ENCODE measurements at regions of chr19 and their contacts with region 1.

Region 1: DNA sequence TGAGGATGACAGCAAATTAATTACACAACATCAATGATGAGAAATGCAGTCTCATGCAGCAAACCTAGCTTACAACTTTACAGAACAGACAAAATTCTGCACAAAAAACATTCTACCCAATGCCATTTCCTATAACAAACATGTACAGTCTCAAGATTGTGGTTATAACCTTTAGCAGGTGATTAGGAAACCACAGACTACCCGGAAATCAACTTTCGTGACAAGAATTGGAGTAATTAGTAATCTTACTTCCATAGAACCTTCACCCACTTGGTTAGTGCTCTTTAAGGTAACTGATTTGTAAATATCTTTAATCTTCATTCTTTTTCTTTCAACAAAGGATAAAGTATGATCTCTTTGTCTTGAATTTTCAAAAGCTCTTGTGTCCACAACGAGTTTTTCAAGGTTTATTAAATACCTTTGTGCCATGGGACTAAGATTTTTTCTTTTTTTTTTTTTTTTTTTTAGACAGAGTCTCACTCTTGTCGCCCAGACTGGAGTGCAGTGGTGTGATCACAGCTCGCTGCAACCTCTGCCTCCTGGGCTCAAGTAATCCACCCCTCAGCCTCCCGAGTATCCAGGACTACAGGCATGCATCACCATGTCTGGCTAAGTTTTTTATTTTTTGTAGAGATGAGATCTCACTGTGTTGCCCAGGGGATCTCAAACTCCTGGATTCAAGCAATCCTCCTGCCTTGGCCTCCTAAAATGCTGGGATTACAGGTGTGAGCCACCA is 78.8 kb downstream of the MAP4K1 start:
- DNase-seq: peak; percentile 28
- H3K4me3 Mint-ChIP-seq: peak overlapping the region; percentile 47
- H3K27ac Mint-ChIP-seq: peak overlapping the region; percentile 91
- H3K4me1 Mint-ChIP-seq: peaks cover 39% of the 10 kb centered on the region
- H3K27me3 Mint-ChIP-seq: no peaks in the 10 kb centered on the region

Region 2: DNA sequence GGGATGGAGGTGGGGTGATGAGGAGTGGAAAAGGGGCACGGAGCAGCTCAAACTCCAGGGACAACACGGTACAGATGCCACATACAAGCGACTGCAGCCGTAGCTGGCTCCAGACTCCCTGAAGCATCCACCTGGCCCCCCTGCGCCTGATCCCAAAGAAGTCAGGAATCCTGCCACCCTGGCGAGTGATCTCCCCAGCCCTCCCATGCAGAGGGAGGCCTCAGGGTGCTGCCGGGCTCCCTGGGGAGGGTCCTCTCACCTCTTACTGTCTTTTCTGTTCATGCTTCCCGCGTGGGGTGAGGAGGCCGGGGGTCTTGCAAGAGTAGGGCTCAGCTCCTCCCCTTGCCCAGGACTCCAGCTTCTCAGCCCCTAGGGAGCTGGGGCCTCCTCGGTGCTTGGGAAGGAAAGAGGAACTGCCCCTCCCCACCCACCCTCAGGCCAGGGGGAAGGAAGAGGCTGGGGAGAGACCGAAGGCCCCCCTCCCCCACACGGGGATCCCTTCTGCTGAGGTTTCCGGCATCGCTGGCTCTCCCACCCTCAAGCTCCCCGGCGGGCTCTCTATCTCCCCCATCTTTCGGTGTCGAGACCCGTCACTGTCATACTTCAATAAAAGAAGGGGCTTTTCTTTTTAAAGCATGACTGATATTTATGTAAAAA is 113.0 kb before region 1 on chr19 and contains the start of gene RASGRP4:
- intact Hi-C with region 1: loop called (anchors 1 kb)
- DNase-seq: peak; percentile 46
- H3K4me3 Mint-ChIP-seq: peak within 1 kb of the TSS; percentile 75
- H3K27ac Mint-ChIP-seq: peak within 1 kb of the TSS; percentile 95
- H3K4me1 Mint-ChIP-seq: peaks cover 28% of the 10 kb centered on the region
- H3K27me3 Mint-ChIP-seq: no peaks in the 10 kb centered on the region
- total RNA-seq, gene RASGRP4: 17.6 and 20.0 TPM in 2 replicates

Region 3: DNA sequence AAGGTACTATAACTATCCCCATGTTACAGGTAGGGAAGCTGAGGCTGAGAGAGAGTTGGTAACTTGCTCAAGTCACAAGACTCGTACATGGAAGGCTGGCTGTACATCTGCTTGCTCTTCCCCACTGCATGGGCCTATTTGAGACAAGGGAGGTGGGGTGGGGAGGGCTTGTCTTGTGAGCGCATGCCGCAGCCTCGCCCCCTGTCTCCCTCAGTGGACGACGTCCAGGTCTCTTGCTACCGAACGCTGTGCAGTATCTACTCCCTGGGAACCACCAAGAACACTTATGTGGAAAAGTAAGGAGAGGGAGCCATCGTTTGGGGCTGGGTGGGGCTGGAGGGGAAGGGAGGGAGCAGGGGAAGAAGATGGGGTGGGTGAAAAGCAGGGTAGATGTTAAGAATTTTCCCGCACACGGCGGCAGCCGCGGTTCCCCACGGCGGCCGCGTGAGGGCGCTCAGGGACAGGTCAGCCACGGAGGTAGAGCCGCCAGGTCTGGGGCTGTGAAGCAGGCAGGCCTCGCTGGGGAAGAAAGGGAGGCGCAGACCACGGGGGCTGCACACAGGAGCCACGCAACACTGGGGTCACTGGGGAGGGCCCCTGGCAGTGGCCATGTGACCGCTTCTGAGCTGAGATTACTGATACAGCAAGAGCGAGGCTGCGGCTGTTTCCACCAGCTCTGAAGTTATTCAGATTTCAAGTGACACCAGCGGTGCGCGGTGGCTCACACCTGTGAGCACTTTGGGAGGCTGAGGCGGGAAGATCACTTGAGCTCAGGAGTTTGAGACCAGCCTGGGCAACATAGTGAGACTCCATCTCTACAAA is 23.9 kb before region 1 on chr19:
- intact Hi-C with region 1: loop called (anchors 2 kb)
- DNase-seq: peak; percentile 71
- H3K4me3 Mint-ChIP-seq: no peak overlapping the region
- H3K27ac Mint-ChIP-seq: no peak overlapping the region
- H3K4me1 Mint-ChIP-seq: peaks cover 19% of the 10 kb centered on the region
- H3K27me3 Mint-ChIP-seq: peaks cover 3% of the 10 kb centered on the region